ENCODE measurements at regions of chr3 and their contacts with region 1.

Region 1: DNA sequence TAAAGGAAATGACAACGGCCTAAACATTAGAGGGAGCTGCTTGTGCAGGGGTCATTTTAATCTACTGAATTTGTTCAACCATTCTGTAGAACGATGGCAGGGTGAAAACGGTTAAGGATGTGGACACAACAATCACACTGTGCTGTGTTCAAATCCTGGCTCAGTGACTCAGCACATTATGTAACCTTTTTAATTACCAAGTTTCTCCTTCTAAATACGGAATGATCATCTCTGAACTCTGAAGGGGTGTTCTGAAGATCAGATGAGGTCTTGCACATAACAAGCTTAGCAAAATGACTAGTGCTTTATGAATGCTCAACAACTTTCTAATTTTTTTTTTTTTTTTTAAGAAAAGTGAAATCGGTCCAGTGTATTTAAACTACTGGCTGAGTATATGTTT is 592.8 kb downstream of the FOXP1 start:
- DNase-seq: no peak
- ATAC-seq: no peak
- H3K4me3 ChIP-seq: no peak overlapping the region
- H3K4me3 Mint-ChIP-seq: peak overlapping the region in 8 of 10 donors; percentile 46 to 80 (median 56)
- H3K27ac ChIP-seq: peak overlapping the region; percentile 17
- H3K27ac Mint-ChIP-seq: peak overlapping the region in 7 of 9 donors; percentile 56 to 90 (median 88)
- H3K4me1 ChIP-seq: peaks cover 17 to 35% of the 10 kb centered on the region in 2 donors
- H3K4me1 Mint-ChIP-seq: peaks cover 28 to 95% (median 82%) of the 10 kb centered on the region in 7 donors
- H3K27me3 ChIP-seq: no peaks in the 10 kb centered on the region
- H3K27me3 Mint-ChIP-seq: no peaks in the 10 kb centered on the region

Region 2: GRCh38 chr3:70973558-70973957 is 17.2 kb before region 1 on chr3:
- CTCF ChIA-PET with region 1: interaction called, 4 read pairs
- POLR2A ChIA-PET with region 1: interaction called, 3 read pairs
- intact Hi-C with region 1: loop called in 1 of 2 experiments (anchors 2 kb)
- DNase-seq: no peak
- ATAC-seq: no peak
- H3K4me3 ChIP-seq: no peak overlapping the region
- H3K4me3 Mint-ChIP-seq: no peak overlapping the region
- H3K27ac ChIP-seq: no peak overlapping the region
- H3K27ac Mint-ChIP-seq: peak overlapping the region in 3 of 9 donors; percentile 8 to 67 (median 19)
- H3K4me1 ChIP-seq: no peaks in the 10 kb centered on the region
- H3K4me1 Mint-ChIP-seq: peaks cover 0 to 18% (median 9%) of the 10 kb centered on the region in 7 donors
- H3K27me3 ChIP-seq: no peaks in the 10 kb centered on the region
- H3K27me3 Mint-ChIP-seq: no peaks in the 10 kb centered on the region

Region 3: GRCh38 chr3:72368331-72368975 is 1377.7 kb after region 1 on chr3:
- CTCF ChIA-PET with region 1: no interaction called
- POLR2A ChIA-PET with region 1: no interaction called
- intact Hi-C with region 1: no loop called
- DNase-seq: no peak
- ATAC-seq: no peak
- H3K4me3 ChIP-seq: no peak overlapping the region
- H3K4me3 Mint-ChIP-seq: no peak overlapping the region
- H3K27ac ChIP-seq: no peak overlapping the region
- H3K27ac Mint-ChIP-seq: no peak overlapping the region
- H3K4me1 ChIP-seq: peaks cover 0 to 7% of the 10 kb centered on the region in 2 donors
- H3K4me1 Mint-ChIP-seq: peaks cover 3 to 23% (median 22%) of the 10 kb centered on the region in 7 donors
- H3K27me3 ChIP-seq: no peaks in the 10 kb centered on the region
- H3K27me3 Mint-ChIP-seq: no peaks in the 10 kb centered on the region

Measured in naive thymus-derived CD4-positive, alpha-beta T cell (primary cell).